Common myeloid progenitor, CD34-positive (primary cell): ENCODE measurements at regions of chr19 and their contacts with region 1.

Region 1: GRCh38 chr19:33176670-33177416 is 17.3 kb upstream of the LRP3 start:
- DNase-seq: peak; percentile 92 to 97 (median 96)
- H3K4me3 ChIP-seq: peak overlapping the region; percentile 83 to 96 (median 93)
- H3K27ac ChIP-seq: peak overlapping the region; percentile 74 to 90
- H3K4me1 ChIP-seq: peaks cover 10 to 33% (median 21%) of the 10 kb centered on the region in 4 experiments
- H3K27me3 ChIP-seq: no peaks in the 10 kb centered on the region

Region 2: DNA sequence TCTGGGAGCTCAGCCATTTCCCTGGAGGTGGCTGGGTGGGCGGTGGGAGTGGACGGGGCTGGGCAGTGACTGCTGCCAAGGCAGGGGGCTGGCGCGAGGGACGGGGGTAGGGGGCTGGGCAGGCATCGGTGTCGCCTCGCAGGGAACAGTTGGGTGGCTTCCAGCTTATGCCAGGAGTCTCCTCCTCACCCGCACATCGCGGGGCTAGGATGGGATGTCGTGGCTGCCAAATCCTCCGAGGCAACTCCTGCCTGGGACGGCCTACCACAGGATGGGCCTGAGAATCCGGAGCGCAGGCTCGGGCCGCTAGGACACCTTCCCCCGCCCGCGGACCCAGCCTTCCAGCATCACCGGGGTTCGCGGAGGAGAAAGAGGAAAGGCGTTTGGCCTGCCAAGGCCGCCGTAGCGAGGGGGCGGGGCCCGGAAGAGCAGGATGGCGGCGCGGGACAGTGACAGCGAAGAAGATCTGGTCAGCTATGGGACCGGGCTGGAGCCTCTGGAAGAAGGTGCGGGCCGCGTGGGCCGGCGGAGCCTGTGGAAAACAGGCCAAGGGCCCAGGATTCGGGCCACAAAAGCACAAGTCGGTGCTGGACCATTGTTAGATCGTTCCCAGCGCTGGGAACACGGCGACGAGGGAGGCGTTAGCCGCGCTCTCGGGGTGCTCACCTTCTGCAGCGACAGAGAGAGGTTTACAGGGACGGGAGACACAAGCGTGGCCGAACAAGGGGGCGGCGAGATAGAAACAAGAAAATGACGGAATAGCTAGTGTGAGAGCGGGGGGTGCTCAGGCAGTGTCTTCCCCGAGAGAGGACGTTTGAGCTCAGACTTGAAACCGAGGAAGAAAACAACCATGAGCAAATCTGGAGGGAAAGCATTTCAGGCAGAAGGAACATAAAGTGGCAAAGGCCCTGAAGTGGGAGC is 95.8 kb before region 1 on chr19 and contains the start of gene GPATCH1:
- CTCF ChIA-PET with region 1: no interaction called
- POLR2A ChIA-PET with region 1: no interaction called
- DNase-seq: peak; percentile 75 to 87 (median 82)
- H3K4me3 ChIP-seq: peak within 1 kb of the TSS; percentile 95 to 100 (median 99)
- H3K27ac ChIP-seq: peak within 1 kb of the TSS; percentile 66 to 80
- H3K4me1 ChIP-seq: peaks cover 9 to 21% (median 16%) of the 10 kb centered on the region in 4 experiments
- H3K27me3 ChIP-seq: peaks cover 0 to 2% (median 0%) of the 10 kb centered on the region in 5 experiments

Region 3: GRCh38 chr19:33143897-33144405 is 32.9 kb before region 1 on chr19:
- CTCF ChIA-PET with region 1: interaction called, 27 read pairs
- POLR2A ChIA-PET with region 1: no interaction called
- DNase-seq: peak; percentile 64 to 74 (median 73)
- H3K4me3 ChIP-seq: peak overlapping the region in 1 of 7 experiments; percentile 42
- H3K27ac ChIP-seq: no peak overlapping the region
- H3K4me1 ChIP-seq: peaks cover 0 to 4% (median 0%) of the 10 kb centered on the region in 4 experiments
- H3K27me3 ChIP-seq: peaks cover 0 to 1% (median 0%) of the 10 kb centered on the region in 5 experiments

Region 4: GRCh38 chr19:33163481-33163880 is 13.4 kb before region 1 on chr19:
- CTCF ChIA-PET with region 1: interaction called, 47 read pairs
- POLR2A ChIA-PET with region 1: interaction called, 7 read pairs
- DNase-seq: no peak
- H3K4me3 ChIP-seq: no peak overlapping the region
- H3K27ac ChIP-seq: no peak overlapping the region
- H3K4me1 ChIP-seq: peaks cover 2 to 35% (median 18%) of the 10 kb centered on the region in 4 experiments
- H3K27me3 ChIP-seq: no peaks in the 10 kb centered on the region